ENCODE measurements at regions of chr4 and their contacts with region 1.

Region 1: DNA sequence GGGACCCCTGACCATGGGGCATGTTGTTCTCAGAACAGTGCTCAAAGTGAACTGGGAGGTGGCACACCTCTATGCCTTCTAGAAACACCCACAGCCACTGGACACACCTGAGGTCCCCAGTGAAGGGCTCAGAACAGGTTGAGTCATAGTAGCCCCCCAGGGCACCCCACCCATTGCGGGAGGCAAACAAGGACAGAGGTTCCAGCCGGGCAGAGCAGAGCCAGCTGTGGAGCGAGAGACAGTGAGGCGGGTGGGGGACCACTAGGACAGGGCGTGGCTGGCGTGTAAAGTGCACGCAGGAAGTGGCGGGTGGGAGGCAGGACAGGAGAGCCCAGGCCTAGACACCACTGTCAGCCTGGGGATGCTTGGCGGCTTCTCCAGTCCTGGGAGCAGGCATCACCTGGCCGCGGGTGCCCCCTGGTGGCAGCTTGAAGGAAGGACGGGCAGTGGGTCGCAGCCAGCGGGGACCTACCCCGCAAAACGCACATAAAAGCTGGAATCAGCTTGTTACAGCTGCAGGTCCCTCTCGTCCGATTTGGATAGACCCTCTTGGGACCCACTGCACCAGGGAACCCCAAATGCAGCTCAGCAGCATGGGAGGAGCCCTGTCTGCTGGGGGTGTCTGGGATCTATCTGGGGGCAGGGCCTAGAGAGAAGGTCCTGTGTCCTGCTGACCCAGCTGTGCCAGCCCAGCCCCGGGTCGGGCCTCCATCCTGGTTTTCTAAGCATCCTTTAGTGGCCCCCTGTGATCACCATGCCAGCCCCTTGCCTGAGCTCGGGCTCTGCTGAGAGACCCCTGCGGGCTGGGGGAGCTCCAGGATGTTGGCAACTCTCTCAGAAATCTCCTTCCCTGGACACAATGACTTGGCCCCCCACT is 57.6 kb downstream of the WFS1 start:
- DNase-seq: peak; percentile 65
- H3K4me3 ChIP-seq: no peak overlapping the region
- H3K27ac ChIP-seq: no peak overlapping the region
- H3K4me1 ChIP-seq: peaks cover 14% of the 10 kb centered on the region
- H3K27me3 ChIP-seq: no peaks in the 10 kb centered on the region
- CTCF ChIP-seq: peak; percentile 86 to 94
- POLR2A ChIP-seq: no peak

Region 2: GRCh38 chr4:6264225-6264540 is 63.1 kb before region 1 on chr4:
- CTCF ChIA-PET with region 1: interaction called, 623 read pairs
- POLR2A ChIA-PET with region 1: no interaction called
- dilution Hi-C with region 1: no loop called
- intact Hi-C with region 1: loop called (anchors 1 kb)
- DNase-seq: peak; percentile 69
- H3K4me3 ChIP-seq: no peak overlapping the region
- H3K27ac ChIP-seq: no peak overlapping the region
- H3K4me1 ChIP-seq: no peaks in the 10 kb centered on the region
- H3K27me3 ChIP-seq: peaks cover 11 to 13% of the 10 kb centered on the region in 2 experiments
- CTCF ChIP-seq: peak; percentile 50 to 78
- POLR2A ChIP-seq: no peak

Region 3: DNA sequence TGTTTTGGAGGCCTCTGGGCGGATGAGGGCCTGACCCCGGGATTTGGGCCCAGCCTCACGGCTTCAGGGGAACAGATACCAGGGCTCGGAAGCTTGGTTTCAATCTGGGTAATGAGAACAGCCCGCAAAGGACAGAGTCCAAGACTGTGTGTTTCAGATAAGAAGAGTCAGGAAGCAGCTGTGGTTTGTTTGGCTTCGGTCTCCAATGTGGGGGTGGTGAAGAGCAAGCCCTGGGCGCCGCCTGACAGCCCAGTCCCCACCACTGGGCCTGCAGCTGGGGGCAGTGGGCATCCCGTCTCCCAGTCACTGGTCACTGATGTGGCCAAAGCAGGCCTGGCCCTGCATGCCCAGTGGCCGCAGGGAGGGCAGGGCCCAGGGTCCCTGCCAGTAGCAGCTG is 48.5 kb before region 1 on chr4:
- CTCF ChIA-PET with region 1: interaction called, 19 read pairs
- POLR2A ChIA-PET with region 1: no interaction called
- dilution Hi-C with region 1: no loop called
- intact Hi-C with region 1: no loop called
- DNase-seq: peak; percentile 96
- H3K4me3 ChIP-seq: no peak overlapping the region
- H3K27ac ChIP-seq: peak overlapping the region; percentile 64
- H3K4me1 ChIP-seq: peaks cover 23% of the 10 kb centered on the region
- H3K27me3 ChIP-seq: no peaks in the 10 kb centered on the region
- CTCF ChIP-seq: no peak
- POLR2A ChIP-seq: peak; percentile 76

Region 4: GRCh38 chr4:6343950-6344408 is 16.7 kb after region 1 on chr4:
- CTCF ChIA-PET with region 1: interaction called, 24 read pairs
- POLR2A ChIA-PET with region 1: no interaction called
- dilution Hi-C with region 1: no loop called
- intact Hi-C with region 1: no loop called
- DNase-seq: no peak
- H3K4me3 ChIP-seq: no peak overlapping the region
- H3K27ac ChIP-seq: no peak overlapping the region
- H3K4me1 ChIP-seq: no peaks in the 10 kb centered on the region
- H3K27me3 ChIP-seq: no peaks in the 10 kb centered on the region
- CTCF ChIP-seq: no peak
- POLR2A ChIP-seq: no peak